Breast epithelium (tissue), 4 donors: ENCODE measurements at regions of chrX and their contacts with region 1.

Region 1: GRCh38 chrX:55867181-55867651 is 149.7 kb downstream of the RRAGB start:
- DNase-seq: no peak
- H3K4me3 ChIP-seq: no peak overlapping the region
- H3K27ac ChIP-seq: no peak overlapping the region
- H3K4me1 ChIP-seq: no peaks in the 10 kb centered on the region
- H3K27me3 ChIP-seq: peaks cover 0 to 5% of the 10 kb centered on the region in 2 donors
- CTCF ChIP-seq: no peak
- POLR2A ChIP-seq: no peak

Region 2: GRCh38 chrX:54633641-54634040 is 1233.6 kb before region 1 on chrX:
- intact Hi-C with region 1: loop called (anchors 10 kb)
- DNase-seq: no peak
- H3K4me3 ChIP-seq: no peak overlapping the region
- H3K27ac ChIP-seq: no peak overlapping the region
- H3K4me1 ChIP-seq: no peaks in the 10 kb centered on the region
- H3K27me3 ChIP-seq: no peaks in the 10 kb centered on the region
- CTCF ChIP-seq: no peak
- POLR2A ChIP-seq: no peak